K562 (cell line): ENCODE measurements at regions of chr19 and their contacts with region 1.

Region 1: DNA sequence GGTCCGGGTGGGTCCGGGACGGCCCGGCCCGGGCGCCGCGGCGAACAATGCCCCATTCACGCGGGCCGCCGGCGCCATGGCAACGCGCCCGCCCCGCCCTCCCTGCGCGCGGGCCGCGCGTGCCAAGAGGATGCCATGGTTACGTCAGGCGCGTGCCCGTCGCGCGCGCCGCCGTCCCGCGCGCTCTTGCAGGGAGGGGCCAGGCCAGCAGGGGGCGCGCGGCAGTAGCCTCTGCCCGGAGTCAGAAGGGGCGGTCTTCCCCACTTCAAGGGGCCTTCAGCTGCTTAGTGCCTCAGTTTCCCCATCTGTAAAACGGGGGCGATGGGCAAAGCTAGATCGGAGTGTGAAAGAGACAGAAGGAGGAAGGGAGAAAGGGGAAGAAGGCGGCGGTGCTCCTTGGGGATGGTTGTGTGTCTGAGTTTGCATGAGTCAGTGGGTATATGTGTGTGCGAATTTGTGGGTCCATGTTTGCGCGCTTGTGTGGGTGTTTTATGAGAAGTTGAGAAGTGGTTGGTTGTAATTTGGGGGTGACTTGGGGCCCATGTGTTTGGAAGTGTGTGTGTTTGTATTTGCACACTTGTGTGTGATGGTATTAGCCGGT is 11.6 kb upstream of the NFIX start:
- DNase-seq: peak; percentile 79 to 93 (median 88)
- ATAC-seq: peak; percentile 68
- H3K4me3 ChIP-seq: peak overlapping the region; percentile 42
- H3K27ac ChIP-seq: no peak overlapping the region
- H3K4me1 ChIP-seq: peaks cover 21 to 47% of the 10 kb centered on the region in 2 experiments; a peak in 4 of 5 replicates
- H3K27me3 ChIP-seq: no peaks in the 10 kb centered on the region
- CTCF ChIP-seq: peak; percentile 91 to 96 (median 92)
- EP300 ChIP-seq: no peak
- POLR2A ChIP-seq: no peak
- RAD21 ChIP-seq: peak; percentile 83 to 94

Region 2: DNA sequence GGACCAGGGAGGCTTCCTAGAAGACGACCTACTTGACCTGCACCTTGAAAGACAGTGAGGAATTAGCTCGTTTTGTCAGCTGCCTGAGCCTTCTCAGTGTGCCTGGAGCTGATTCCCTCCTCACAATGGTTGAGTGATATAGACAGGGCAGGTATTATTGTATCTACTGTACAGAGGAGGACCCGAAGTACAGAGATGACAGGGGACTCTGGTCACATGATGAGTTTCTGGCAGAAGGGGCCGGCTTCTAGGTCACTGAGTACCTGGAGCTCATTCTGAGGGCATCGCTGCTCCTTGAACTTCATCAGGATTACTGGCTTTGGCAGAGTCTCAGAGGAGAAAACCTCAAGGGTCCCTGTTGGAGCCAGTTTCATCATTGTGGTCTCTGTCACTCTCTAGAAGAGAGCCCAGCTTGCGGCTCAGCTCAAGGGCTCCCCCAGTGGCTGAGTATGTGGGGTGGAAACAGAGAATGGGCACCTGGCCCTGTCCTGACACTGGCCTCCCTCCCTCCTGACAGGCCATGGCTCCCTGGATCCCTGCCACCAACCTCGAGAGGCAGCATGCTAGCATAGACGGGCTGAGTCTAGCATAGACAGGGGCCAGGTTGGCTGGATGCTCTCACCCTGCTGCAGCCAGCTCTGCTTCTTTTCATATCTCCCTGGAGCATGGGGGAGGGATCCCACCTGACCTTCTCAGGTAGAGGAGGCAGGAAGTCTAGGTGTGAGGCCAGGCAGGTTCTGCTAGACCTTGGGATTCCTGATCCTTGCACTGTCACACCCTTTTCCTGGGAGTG is 50.4 kb after region 1 on chr19:
- CTCF ChIA-PET with region 1: interaction called, 8 read pairs
- POLR2A ChIA-PET with region 1: no interaction called
- in situ Hi-C with region 1: loop called (anchors 5 kb)
- intact Hi-C with region 1: loop called (anchors 1 kb)
- DNase-seq: peak; percentile 75 to 88 (median 81)
- ATAC-seq: peak; percentile 98
- H3K4me3 ChIP-seq: no peak overlapping the region
- H3K27ac ChIP-seq: no peak overlapping the region
- H3K4me1 ChIP-seq: peaks cover 11 to 19% of the 10 kb centered on the region in 2 experiments; a peak in 3 of 5 replicates
- H3K27me3 ChIP-seq: no peaks in the 10 kb centered on the region
- CTCF ChIP-seq: peak; percentile 84 to 93 (median 88)
- EP300 ChIP-seq: no peak
- POLR2A ChIP-seq: no peak
- RAD21 ChIP-seq: peak; percentile 32 to 72; a peak in 3 of 4 replicates

Region 3: GRCh38 chr19:13060964-13061927 is 77.6 kb after region 1 on chr19:
- CTCF ChIA-PET with region 1: interaction called, 4 read pairs
- POLR2A ChIA-PET with region 1: interaction called, 3 read pairs
- in situ Hi-C with region 1: no loop called
- intact Hi-C with region 1: loop called (anchors 1 kb)
- DNase-seq: peak; percentile 84 to 89 (median 88)
- ATAC-seq: peak; percentile 98
- H3K4me3 ChIP-seq: peak overlapping the region; percentile 12; the same call in 1 of the 2 replicates
- H3K27ac ChIP-seq: no peak overlapping the region
- H3K4me1 ChIP-seq: peaks cover 17 to 62% of the 10 kb centered on the region in 2 experiments; a peak in 4 of 5 replicates
- H3K27me3 ChIP-seq: no peaks in the 10 kb centered on the region
- CTCF ChIP-seq: peak; percentile 92 to 97 (median 95)
- EP300 ChIP-seq: no peak
- POLR2A ChIP-seq: no peak
- RAD21 ChIP-seq: peak; percentile 88 to 91

Region 4: DNA sequence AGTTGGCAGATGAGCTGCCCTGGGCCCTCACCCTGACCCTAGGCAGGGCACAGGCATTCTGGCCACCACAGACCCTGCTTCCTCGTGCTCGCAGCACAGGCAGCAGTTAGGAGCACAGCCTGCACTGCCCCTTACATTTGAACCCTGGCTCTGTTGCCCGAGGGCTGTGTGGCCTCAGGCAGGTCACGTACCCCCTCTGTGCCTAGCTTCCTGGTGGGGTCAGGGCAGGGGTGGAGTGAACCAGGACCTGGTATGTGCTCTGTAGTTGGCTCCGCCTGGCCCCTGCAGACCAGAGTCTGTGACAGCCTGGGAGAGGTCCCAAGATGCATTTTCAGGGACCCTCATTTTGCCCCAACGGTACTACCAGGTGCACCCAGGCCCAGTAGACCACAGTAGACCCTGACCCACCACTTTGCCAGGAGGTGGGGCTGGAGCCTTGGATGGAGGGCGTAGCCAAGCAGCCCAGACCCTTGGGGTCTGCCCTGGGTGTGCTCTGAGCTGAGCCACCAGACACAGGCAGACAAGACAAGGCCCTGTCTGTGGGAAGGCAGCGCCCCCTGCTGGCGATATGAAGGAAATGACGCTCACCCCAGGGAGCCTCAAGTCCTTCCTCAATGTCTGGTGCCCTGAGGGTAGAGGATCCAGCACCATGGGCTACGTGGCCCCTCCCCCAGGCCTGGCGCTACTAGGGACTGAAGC is 109.9 kb after region 1 on chr19:
- CTCF ChIA-PET with region 1: interaction called, 59 read pairs
- POLR2A ChIA-PET with region 1: interaction called, 17 read pairs
- in situ Hi-C with region 1: loop called (anchors 5 kb)
- intact Hi-C with region 1: no loop called
- DNase-seq: peak; percentile 83 to 92 (median 87)
- ATAC-seq: peak; percentile 57
- H3K4me3 ChIP-seq: no peak overlapping the region
- H3K27ac ChIP-seq: peak overlapping the region; percentile 10; the same call in 1 of the 3 replicates
- H3K4me1 ChIP-seq: peaks cover 36 to 84% of the 10 kb centered on the region in 2 experiments
- H3K27me3 ChIP-seq: no peaks in the 10 kb centered on the region
- CTCF ChIP-seq: peak; percentile 94 to 96 (median 95)
- EP300 ChIP-seq: no peak
- POLR2A ChIP-seq: no peak
- RAD21 ChIP-seq: peak; percentile 97 to 98